GM18951 (cell line): ENCODE measurements at regions of chr6 and their contacts with region 1.

Region 1: DNA sequence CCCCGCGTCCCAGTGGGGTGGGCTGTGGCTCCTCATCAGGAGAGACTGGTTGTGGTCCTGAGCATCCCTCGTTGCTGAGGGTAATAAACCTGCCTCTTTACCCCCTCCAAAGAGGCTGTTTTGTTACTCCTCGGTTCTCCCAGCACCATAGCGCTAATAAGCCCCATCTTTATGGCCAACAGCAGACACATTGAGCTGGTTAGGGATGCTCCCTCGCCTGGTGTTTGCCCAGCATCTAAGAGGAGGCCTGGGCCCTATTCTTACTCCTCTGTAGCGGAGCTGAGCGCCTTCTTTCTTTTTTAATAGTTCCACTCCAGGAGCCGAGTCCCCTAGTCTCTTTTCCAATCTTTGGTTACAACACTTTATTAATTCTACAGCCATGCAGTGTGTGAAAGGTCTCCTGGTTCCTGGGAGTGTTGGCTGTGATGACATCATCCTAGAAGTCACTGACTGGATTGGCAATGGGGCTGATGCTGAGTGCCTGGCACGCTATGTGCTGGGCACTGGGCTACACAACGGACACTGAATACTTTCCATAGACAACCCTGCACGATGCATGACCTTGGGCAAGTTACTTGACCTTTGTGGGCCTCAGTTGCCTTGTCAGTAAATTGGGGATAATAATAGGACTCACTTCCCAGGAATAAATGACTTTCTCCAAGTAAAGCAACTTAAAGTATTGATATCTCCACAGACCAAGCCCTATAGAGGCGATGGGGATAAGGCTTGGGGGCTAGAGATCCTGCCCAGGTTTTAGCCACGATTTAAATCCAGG is 50.7 kb upstream of the CCDC167 start:
- POLR2A ChIP-seq: no peak

Region 2: GRCh38 chr6:37499433-37500293 is 50.7 kb before region 1 on chr6 and contains the start of gene CCDC167:
- in situ Hi-C with region 1: loop called (anchors 10 kb)
- POLR2A ChIP-seq: peak; percentile 54

Region 3: GRCh38 chr6:38187325-38187724 is 636.9 kb after region 1 on chr6:
- in situ Hi-C with region 1: no loop called
- POLR2A ChIP-seq: no peak